ENCODE measurements at regions of chr1 and their contacts with region 1.

Region 1: GRCh38 chr1:159780583-159781582 is at the start of gene DUSP23:
- DNase-seq: peak; percentile 97
- ATAC-seq: peak; percentile 99
- H3K4me3 Mint-ChIP-seq: peak within 1 kb of the TSS; percentile 70
- H3K27ac Mint-ChIP-seq: peak within 1 kb of the TSS; percentile 14
- H3K4me1 Mint-ChIP-seq: peaks cover 12% of the 10 kb centered on the region
- H3K27me3 Mint-ChIP-seq: peaks cover 2% of the 10 kb centered on the region
- total RNA-seq, gene DUSP23: 23.9 to 26.8 TPM

Region 2: GRCh38 chr1:159829273-159829634 is 48.4 kb after region 1 on chr1:
- CTCF ChIA-PET with region 1: no interaction called
- POLR2A ChIA-PET with region 1: no interaction called
- intact Hi-C with region 1: loop called (anchors 2 to 5 kb)
- DNase-seq: peak; percentile 28
- ATAC-seq: peak; percentile 32
- H3K4me3 Mint-ChIP-seq: no peak overlapping the region
- H3K27ac Mint-ChIP-seq: no peak overlapping the region
- H3K4me1 Mint-ChIP-seq: peaks cover 39% of the 10 kb centered on the region
- H3K27me3 Mint-ChIP-seq: no peaks in the 10 kb centered on the region

Measured in activated CD4-positive, alpha-beta T cell treated with anti-CD3 and anti-CD28 coated beads for 36 hours (primary cell).